CD8-positive, alpha-beta T cell (primary cell): ENCODE measurements at regions of chr5 and their contacts with region 1.

Region 1: DNA sequence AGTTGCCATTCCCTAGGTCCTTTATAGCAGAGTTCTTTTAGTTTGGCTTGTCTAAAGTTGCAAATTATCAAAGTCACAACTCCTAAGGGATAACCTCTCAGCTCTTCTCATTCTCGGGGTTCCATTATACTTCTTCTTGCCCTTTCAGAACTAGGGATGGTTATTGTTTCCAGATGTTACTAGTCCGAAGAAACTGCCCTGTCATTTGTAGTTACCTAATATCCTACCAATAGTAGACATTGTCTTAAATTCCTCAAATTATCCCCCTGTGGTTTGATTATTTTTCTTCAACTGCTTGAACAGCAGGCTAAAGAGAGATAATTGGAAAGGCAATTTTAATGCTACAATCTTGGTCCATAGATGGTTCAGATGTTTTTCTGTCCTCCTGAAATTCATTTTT is 709.8 kb downstream of the KCTD16 start:
- DNase-seq: no peak
- ATAC-seq: no peak
- H3K4me3 ChIP-seq: no peak overlapping the region
- H3K4me3 Mint-ChIP-seq: no peak overlapping the region
- H3K27ac ChIP-seq: no peak overlapping the region
- H3K27ac Mint-ChIP-seq: no peak overlapping the region
- H3K4me1 ChIP-seq: no peaks in the 10 kb centered on the region
- H3K4me1 Mint-ChIP-seq: no peaks in the 10 kb centered on the region
- H3K27me3 ChIP-seq: no peaks in the 10 kb centered on the region
- H3K27me3 Mint-ChIP-seq: no peaks in the 10 kb centered on the region
- CTCF ChIP-seq: no peak

Region 2: DNA sequence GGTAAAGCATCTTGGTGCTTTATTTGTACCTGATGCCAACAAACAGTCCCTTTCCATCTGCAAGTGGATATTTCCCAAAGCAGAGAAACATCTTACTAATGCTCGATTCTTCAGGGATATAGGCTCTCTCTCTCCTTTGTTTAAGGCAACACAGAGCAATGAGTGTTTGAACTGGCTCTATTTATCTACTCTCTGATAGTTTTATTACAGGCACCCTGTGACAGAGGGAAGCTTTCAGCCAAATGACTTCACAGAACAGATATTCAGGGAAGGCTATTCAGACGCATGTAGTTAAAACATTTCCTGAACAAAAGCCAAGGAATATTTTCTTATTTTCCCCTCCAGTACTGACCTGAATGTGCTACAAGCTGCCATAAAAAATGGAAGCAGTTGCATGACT is 851.9 kb before region 1 on chr5:
- CTCF ChIA-PET with region 1: no interaction called
- POLR2A ChIA-PET with region 1: no interaction called
- intact Hi-C with region 1: no loop called
- DNase-seq: no peak
- ATAC-seq: no peak
- H3K4me3 ChIP-seq: no peak overlapping the region
- H3K4me3 Mint-ChIP-seq: no peak overlapping the region
- H3K27ac ChIP-seq: no peak overlapping the region
- H3K27ac Mint-ChIP-seq: no peak overlapping the region
- H3K4me1 ChIP-seq: no peaks in the 10 kb centered on the region
- H3K4me1 Mint-ChIP-seq: no peaks in the 10 kb centered on the region
- H3K27me3 ChIP-seq: peaks cover 0 to 3% of the 10 kb centered on the region in 2 experiments
- H3K27me3 Mint-ChIP-seq: peaks cover 10% of the 10 kb centered on the region
- CTCF ChIP-seq: no peak

Region 3: DNA sequence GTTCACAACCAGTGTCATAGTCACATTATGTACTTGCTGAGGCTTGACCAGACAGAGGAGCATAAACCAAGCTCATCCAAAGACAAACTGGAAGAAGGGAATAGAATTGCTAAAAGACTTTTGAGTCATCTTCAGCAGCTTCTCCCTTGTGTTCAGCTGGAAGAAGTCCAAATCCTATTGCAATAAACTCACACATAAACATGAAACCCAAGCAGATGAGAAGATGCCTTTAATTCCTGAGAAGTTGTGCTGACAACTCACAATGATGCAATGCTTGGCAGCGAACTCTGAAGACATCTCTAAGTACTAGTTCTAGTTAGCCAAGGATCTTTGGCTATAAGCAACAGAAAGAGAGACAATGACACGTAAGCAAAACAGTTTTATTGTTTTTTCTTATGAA is 67.8 kb before region 1 on chr5:
- CTCF ChIA-PET with region 1: no interaction called
- POLR2A ChIA-PET with region 1: no interaction called
- intact Hi-C with region 1: no loop called
- DNase-seq: no peak
- ATAC-seq: no peak
- H3K4me3 ChIP-seq: no peak overlapping the region
- H3K4me3 Mint-ChIP-seq: no peak overlapping the region
- H3K27ac ChIP-seq: no peak overlapping the region
- H3K27ac Mint-ChIP-seq: no peak overlapping the region
- H3K4me1 ChIP-seq: no peaks in the 10 kb centered on the region
- H3K4me1 Mint-ChIP-seq: no peaks in the 10 kb centered on the region
- H3K27me3 ChIP-seq: no peaks in the 10 kb centered on the region
- H3K27me3 Mint-ChIP-seq: no peaks in the 10 kb centered on the region
- CTCF ChIP-seq: no peak

Region 4: DNA sequence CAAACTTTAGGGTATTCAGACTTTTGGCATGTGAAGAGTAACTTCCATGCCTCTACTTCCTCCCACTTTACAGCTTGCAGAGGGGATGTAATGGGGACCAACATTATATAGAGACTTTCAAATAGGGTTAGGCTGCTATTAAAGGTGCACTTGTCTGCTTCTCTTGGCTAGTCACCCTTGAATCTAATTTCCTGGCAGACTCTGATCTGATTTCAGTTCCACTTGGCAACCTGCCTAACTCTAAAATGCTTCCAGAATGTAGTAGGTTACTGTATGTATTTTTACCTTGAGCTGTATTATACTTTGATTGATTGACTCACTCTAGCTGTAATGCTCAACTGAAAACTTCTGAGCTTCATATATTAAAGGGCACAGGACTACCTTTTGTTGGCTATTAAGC is 16.4 kb before region 1 on chr5:
- CTCF ChIA-PET with region 1: no interaction called
- POLR2A ChIA-PET with region 1: no interaction called
- intact Hi-C with region 1: loop called in 1 of 2 experiments (anchors 1 kb)
- DNase-seq: no peak
- ATAC-seq: no peak
- H3K4me3 ChIP-seq: no peak overlapping the region
- H3K4me3 Mint-ChIP-seq: no peak overlapping the region
- H3K27ac ChIP-seq: no peak overlapping the region
- H3K27ac Mint-ChIP-seq: no peak overlapping the region
- H3K4me1 ChIP-seq: no peaks in the 10 kb centered on the region
- H3K4me1 Mint-ChIP-seq: no peaks in the 10 kb centered on the region
- H3K27me3 ChIP-seq: no peaks in the 10 kb centered on the region
- H3K27me3 Mint-ChIP-seq: no peaks in the 10 kb centered on the region
- CTCF ChIP-seq: no peak